Breast epithelium (tissue), 4 donors: ENCODE measurements at regions of chr12 and their contacts with region 1.

Region 1: GRCh38 chr12:45309836-45310626 is 94.1 kb downstream of the ANO6 start:
- DNase-seq: no peak
- H3K4me3 ChIP-seq: no peak overlapping the region
- H3K27ac ChIP-seq: peak overlapping the region; percentile 34 to 58
- H3K4me1 ChIP-seq: no peaks in the 10 kb centered on the region
- H3K27me3 ChIP-seq: no peaks in the 10 kb centered on the region
- CTCF ChIP-seq: peak in 1 of 3 donors; percentile 15
- POLR2A ChIP-seq: no peak

Region 2: GRCh38 chr12:45363903-45364302 is 53.9 kb after region 1 on chr12:
- intact Hi-C with region 1: loop called (anchors 5 kb)
- DNase-seq: no peak
- H3K4me3 ChIP-seq: no peak overlapping the region
- H3K27ac ChIP-seq: no peak overlapping the region
- H3K4me1 ChIP-seq: no peaks in the 10 kb centered on the region
- H3K27me3 ChIP-seq: no peaks in the 10 kb centered on the region
- CTCF ChIP-seq: no peak
- POLR2A ChIP-seq: no peak